Ovary (tissue), 10 donors: ENCODE measurements at regions of chr7 and their contacts with region 1.

Region 1: GRCh38 chr7:99551767-99552463 is at the start of gene FAM200A:
- DNase-seq: peak; percentile 90 to 94 (median 91)
- H3K4me3 ChIP-seq: peak within 1 kb of the TSS; percentile 74
- H3K27ac ChIP-seq: peak within 1 kb of the TSS; percentile 67 to 88
- H3K4me1 ChIP-seq: peaks cover 5% of the 10 kb centered on the region
- H3K27me3 ChIP-seq: no peaks in the 10 kb centered on the region
- CTCF ChIP-seq: no peak
- EP300 ChIP-seq: no peak
- POLR2A ChIP-seq: peak; percentile 92
- total RNA-seq, gene FAM200A: 6.4 to 13.5 (median 9.0) TPM

Region 2: DNA sequence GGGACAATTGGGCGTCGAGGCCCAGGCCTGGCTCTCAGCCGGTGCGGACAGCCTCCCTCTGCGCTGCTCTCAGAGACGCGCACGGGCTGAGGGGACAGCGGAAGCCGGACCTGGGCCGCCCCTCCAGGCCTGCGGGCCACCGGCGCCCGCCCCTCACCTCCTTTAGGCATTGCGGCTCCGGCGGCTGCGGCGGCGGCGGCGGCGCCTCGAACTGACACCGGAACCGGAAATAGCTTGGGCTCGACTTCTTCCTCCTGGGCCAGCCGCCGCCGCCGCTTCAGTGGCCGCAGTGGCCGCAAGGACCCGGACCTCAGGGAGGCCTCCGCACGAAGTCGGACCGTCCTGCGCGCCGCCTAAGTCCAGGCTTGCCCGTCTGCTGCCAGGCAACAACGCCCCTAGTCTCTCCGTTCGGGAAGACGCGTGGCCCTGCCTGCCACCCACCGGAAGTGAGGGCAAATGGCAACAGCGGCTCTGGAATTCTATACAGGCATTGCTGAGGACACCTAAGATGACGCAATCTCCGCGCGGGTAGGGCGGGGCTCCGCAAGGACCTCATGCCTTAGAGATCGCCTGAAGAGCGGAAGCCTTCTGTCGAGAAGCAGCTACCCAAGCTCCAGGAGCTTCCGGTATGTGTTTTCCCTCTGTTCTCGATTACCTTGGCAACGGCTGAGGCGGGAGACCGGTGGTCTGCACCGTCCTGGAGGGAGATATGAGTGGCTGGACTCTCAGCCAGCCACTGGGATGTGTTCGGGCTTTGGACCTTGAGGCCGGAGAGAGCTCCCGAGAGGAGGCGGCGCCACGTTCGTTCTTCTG is 143.3 kb before region 1 on chr7 and contains the starts of genes BUD31 and PDAP1:
- intact Hi-C with region 1: loop called in 1 of 4 experiments (anchors 10 kb)
- DNase-seq: peak; percentile 92 to 96 (median 94)
- H3K4me3 ChIP-seq: peak within 1 kb of the TSS; percentile 100
- H3K27ac ChIP-seq: peak within 1 kb of the TSS; percentile 73 to 99
- H3K4me1 ChIP-seq: peaks cover 10% of the 10 kb centered on the region
- H3K27me3 ChIP-seq: no peaks in the 10 kb centered on the region
- CTCF ChIP-seq: peak in 2 of 3 donors; percentile 60 to 77
- EP300 ChIP-seq: peak; percentile 73
- POLR2A ChIP-seq: peak; percentile 77
- total RNA-seq, gene BUD31: 44.4 to 96.4 (median 53.4) TPM
- total RNA-seq, gene PDAP1: 31.1 to 90.0 (median 83.9) TPM

Region 3: DNA sequence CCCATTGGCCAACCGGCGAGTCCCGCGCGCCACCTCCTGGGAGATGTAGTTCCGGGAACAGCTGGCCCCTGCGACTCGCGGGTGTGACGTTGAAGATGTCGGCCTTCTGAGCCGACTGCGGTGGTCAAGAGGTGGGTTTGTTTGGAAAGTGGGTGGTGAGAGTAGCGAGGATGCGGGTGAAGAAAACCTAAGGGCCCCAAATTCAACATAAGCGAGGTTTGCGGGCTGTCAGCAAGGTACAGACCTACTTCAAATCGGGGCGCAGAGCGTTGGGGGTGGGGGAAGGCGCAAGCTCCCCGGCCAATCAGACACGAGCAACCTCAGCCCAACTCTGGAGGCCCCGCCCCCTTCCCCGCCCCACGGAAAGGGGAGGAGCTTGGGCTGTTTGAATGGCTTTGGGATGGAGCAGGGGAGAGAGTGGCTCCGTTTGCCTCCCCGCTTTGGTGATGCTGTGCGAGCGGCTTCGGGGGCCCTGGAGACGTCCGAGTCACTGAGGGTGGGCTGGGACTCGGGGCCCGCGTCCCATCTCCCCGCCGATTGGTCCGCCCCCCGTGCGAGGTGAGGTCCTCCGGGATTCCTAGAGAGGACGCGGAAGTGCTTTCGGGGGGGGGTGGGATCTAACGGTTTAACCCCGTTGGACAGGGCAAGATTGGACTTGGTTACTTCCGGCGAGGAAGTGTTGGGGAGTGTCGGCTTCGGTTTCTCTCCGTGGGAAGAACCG is 47.2 kb before region 1 on chr7 and contains the start of gene ZKSCAN5:
- intact Hi-C with region 1: loop called in 2 of 4 experiments (anchors 5 kb)
- DNase-seq: peak; percentile 98 to 99 (median 99)
- H3K4me3 ChIP-seq: peak within 1 kb of the TSS; percentile 75
- H3K27ac ChIP-seq: peak within 1 kb of the TSS; percentile 81 to 95
- H3K4me1 ChIP-seq: peaks cover 12% of the 10 kb centered on the region
- H3K27me3 ChIP-seq: no peaks in the 10 kb centered on the region
- CTCF ChIP-seq: no peak
- EP300 ChIP-seq: peak; percentile 72
- POLR2A ChIP-seq: peak; percentile 55
- total RNA-seq, gene ZKSCAN5: 5.4 to 12.1 (median 8.6) TPM

Region 4: DNA sequence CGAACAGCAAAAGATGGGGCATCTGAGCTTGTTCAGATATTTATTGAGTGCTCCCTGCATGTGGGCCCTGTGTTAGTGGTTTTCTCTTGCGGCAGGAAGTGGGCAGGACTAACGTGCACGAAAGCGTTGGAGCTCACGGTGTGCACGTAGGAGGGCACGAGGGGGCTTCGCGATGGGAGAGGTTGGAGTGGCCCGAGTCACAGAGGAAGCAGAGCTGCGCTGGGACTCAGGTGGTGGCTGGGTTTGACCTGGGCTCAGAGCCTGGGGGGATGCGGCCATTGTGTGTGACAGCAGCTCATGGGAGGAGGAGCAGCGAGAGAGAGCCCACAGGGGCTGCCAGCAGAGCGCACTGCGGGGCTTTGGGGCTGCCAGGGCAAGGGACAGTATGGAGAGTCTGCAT is 72.6 kb after region 1 on chr7:
- intact Hi-C with region 1: loop called in 1 of 4 experiments (anchors 10 kb)
- DNase-seq: no peak
- H3K4me3 ChIP-seq: no peak overlapping the region
- H3K27ac ChIP-seq: no peak overlapping the region
- H3K4me1 ChIP-seq: no peaks in the 10 kb centered on the region
- H3K27me3 ChIP-seq: no peaks in the 10 kb centered on the region
- CTCF ChIP-seq: no peak
- EP300 ChIP-seq: no peak
- POLR2A ChIP-seq: no peak